PC-3 (cell line): ENCODE measurements at regions of chr2 and their contacts with region 1.

Region 1: GRCh38 chr2:39069136-39069515 is 51.7 kb downstream of the SOS1 start:
- DNase-seq: no peak
- ATAC-seq: no peak
- H3K4me3 ChIP-seq: no peak overlapping the region
- H3K27ac ChIP-seq: no peak overlapping the region
- H3K4me1 ChIP-seq: no peaks in the 10 kb centered on the region
- H3K27me3 ChIP-seq: no peaks in the 10 kb centered on the region
- CTCF ChIP-seq: peak; percentile 22; the same call in 1 of the 2 replicates

Region 2: GRCh38 chr2:38494394-38494793 is 574.7 kb before region 1 on chr2:
- CTCF ChIA-PET with region 1: no interaction called
- POLR2A ChIA-PET with region 1: no interaction called
- intact Hi-C with region 1: no loop called
- DNase-seq: no peak
- ATAC-seq: no peak
- H3K4me3 ChIP-seq: no peak overlapping the region
- H3K27ac ChIP-seq: no peak overlapping the region
- H3K4me1 ChIP-seq: no peaks in the 10 kb centered on the region
- H3K27me3 ChIP-seq: no peaks in the 10 kb centered on the region
- CTCF ChIP-seq: no peak

Region 3: DNA sequence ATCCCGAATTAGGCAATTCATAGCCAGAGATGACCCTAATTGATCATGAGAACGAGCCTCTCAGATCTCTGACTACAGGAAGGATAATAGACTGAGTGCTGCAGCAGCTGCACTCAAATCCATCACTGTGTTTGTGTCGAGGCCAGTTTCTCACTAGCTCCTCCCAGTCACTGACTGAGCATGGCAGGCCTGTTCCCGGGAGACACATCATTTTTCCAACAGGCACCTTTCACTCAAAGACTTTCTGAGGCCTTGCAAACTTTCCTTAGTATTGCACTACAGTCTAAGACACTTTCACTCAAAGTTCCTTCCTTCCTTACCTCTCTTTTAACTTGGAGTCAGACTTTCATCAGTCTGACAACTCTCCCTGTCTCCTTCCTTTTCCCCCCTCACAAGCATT is 38.0 kb after region 1 on chr2:
- CTCF ChIA-PET with region 1: no interaction called
- POLR2A ChIA-PET with region 1: no interaction called
- intact Hi-C with region 1: loop called (anchors 5 kb)
- DNase-seq: no peak
- ATAC-seq: peak; percentile 53
- H3K4me3 ChIP-seq: no peak overlapping the region
- H3K27ac ChIP-seq: no peak overlapping the region
- H3K4me1 ChIP-seq: no peaks in the 10 kb centered on the region
- H3K27me3 ChIP-seq: no peaks in the 10 kb centered on the region
- CTCF ChIP-seq: no peak

Region 4: GRCh38 chr2:39243476-39244123 is 174.5 kb after region 1 on chr2 and contains the start of gene CDKL4:
- CTCF ChIA-PET with region 1: no interaction called
- POLR2A ChIA-PET with region 1: no interaction called
- intact Hi-C with region 1: no loop called
- DNase-seq: no peak
- ATAC-seq: no peak
- H3K4me3 ChIP-seq: no peak within 1 kb of the TSS
- H3K27ac ChIP-seq: no peak within 1 kb of the TSS
- H3K4me1 ChIP-seq: no peaks in the 10 kb centered on the region
- H3K27me3 ChIP-seq: no peaks in the 10 kb centered on the region
- CTCF ChIP-seq: no peak
- total RNA-seq, gene CDKL4: 0.07 TPM in 1 of 2 replicates, not detected in the other